ENCODE measurements at regions of chr11 and their contacts with region 1.

Region 1: DNA sequence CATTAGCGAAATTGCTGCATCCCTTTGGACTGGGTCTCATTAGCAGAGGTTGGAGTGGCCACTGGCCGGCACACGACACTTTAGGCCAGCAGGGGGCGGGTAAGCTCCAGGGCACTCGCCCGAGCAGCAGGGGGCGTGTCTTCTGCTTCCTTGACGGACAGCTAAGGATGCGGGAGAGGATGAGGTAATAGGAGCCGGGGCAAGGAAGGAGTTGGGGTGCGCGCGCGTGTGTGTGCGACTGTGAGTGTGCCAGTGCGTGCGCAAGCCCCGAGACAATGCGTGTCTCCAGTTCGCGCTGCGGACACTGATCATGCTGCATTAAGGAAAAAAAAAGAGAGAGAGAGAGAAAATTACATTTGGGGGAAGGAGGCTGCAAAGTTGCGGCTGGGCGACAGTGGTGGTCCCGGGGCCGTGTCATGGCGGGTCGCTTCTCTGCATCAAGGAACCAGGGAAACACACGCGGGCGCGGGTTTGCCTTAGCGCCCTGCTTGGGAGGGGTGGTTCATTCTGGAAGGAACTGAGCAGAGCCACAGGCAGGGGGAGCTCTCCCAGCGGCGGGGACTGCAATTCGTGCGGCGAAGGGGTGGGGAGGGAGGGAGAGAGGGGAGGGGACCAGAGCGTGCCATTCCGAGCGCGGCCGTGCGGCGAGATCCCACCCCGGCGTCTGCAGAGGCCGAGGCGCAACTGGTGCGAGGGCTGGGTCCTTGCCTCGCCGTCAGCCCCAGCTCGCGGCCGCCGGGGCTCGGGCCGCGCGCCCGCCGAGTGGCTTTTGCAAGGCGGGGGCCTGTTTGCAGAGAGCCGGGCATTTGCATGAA is at the start of gene DTX4:
- DNase-seq: peak; percentile 78 to 92 (median 89)
- ATAC-seq: peak; percentile 86
- H3K4me3 ChIP-seq: peak within 1 kb of the TSS; percentile 72 to 85
- H3K4me3 Mint-ChIP-seq: peak within 1 kb of the TSS; percentile 87
- H3K27ac ChIP-seq: peak within 1 kb of the TSS in 1 of 2 experiments; percentile 33
- H3K27ac Mint-ChIP-seq: no peak within 1 kb of the TSS
- H3K4me1 ChIP-seq: peaks cover 9% of the 10 kb centered on the region
- H3K4me1 Mint-ChIP-seq: peaks cover 11% of the 10 kb centered on the region
- H3K27me3 ChIP-seq: peaks cover 0 to 5% of the 10 kb centered on the region in 2 experiments
- H3K27me3 Mint-ChIP-seq: peaks cover 6% of the 10 kb centered on the region
- CTCF ChIP-seq: peak; percentile 95
- total RNA-seq, gene DTX4: 0.68 to 0.97 TPM

Region 2: GRCh38 chr11:59158206-59159068 is 13.3 kb before region 1 on chr11:
- CTCF ChIA-PET with region 1: interaction called, 27 read pairs
- POLR2A ChIA-PET with region 1: interaction called, 3 read pairs
- intact Hi-C with region 1: loop called in 1 of 2 experiments (anchors 1 kb)
- DNase-seq: peak; percentile 31 to 85 (median 59)
- ATAC-seq: peak; percentile 99
- H3K4me3 ChIP-seq: no peak overlapping the region
- H3K4me3 Mint-ChIP-seq: no peak overlapping the region
- H3K27ac ChIP-seq: no peak overlapping the region
- H3K27ac Mint-ChIP-seq: no peak overlapping the region
- H3K4me1 ChIP-seq: no peaks in the 10 kb centered on the region
- H3K4me1 Mint-ChIP-seq: peaks cover 4% of the 10 kb centered on the region
- H3K27me3 ChIP-seq: no peaks in the 10 kb centered on the region
- H3K27me3 Mint-ChIP-seq: peaks cover 22% of the 10 kb centered on the region
- CTCF ChIP-seq: peak; percentile 77

Region 3: DNA sequence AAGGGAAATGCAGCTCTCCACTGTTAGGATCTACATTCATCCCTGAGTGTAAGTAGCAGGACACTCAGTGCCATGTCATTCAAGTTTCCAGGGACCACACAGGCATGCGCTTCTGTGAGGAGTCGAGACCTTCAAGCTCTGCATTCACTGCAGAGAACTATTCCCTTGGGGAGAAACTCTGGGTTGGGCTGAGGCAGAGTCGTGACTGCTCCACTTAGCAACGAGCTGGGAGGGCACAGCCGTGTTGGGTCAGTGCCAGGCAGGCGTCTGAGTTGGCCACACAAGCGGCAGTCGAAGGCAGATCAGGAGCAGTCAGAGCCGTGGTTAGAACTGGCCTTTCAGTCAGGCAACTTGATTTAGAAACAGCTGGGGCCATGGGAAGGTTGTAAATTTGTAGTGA is 26.3 kb after region 1 on chr11:
- CTCF ChIA-PET with region 1: interaction called, 25 read pairs
- POLR2A ChIA-PET with region 1: no interaction called
- intact Hi-C with region 1: no loop called
- DNase-seq: no peak
- ATAC-seq: no peak
- H3K4me3 ChIP-seq: no peak overlapping the region
- H3K4me3 Mint-ChIP-seq: no peak overlapping the region
- H3K27ac ChIP-seq: no peak overlapping the region
- H3K27ac Mint-ChIP-seq: no peak overlapping the region
- H3K4me1 ChIP-seq: no peaks in the 10 kb centered on the region
- H3K4me1 Mint-ChIP-seq: peaks cover 6% of the 10 kb centered on the region
- H3K27me3 ChIP-seq: no peaks in the 10 kb centered on the region
- H3K27me3 Mint-ChIP-seq: no peaks in the 10 kb centered on the region
- CTCF ChIP-seq: no peak

Region 4: DNA sequence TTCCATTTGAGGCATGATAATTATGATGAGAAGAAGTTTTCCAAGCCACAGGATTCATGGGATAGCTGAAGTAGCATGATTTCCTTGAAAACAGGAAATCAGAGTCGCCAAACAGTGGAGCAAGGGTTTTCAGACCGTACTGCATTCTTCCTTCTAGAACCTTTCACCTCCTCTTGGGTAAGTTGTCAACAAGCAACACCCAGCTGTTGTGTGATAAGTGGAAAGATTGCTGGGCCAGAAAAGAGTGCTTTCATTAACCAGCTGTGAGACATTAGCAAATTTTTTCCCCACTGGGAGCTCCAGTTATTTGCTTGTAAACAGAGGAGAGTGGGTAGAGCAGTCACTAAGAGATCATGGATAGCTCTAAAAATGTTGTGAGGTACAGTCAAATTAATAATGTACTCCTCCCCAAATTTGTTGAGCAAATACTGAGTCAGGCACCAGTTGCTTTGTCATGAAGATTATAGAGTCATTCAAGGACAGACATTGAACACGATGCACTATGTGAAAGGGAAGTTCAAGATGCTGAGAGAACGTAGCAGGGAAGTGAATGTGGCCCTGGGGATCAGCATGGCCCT is 52.7 kb after region 1 on chr11:
- CTCF ChIA-PET with region 1: no interaction called
- POLR2A ChIA-PET with region 1: no interaction called
- intact Hi-C with region 1: no loop called
- DNase-seq: peak in 1 of 9 experiments; percentile 18
- ATAC-seq: no peak
- H3K4me3 ChIP-seq: no peak overlapping the region
- H3K4me3 Mint-ChIP-seq: no peak overlapping the region
- H3K27ac ChIP-seq: no peak overlapping the region
- H3K27ac Mint-ChIP-seq: no peak overlapping the region
- H3K4me1 ChIP-seq: no peaks in the 10 kb centered on the region
- H3K4me1 Mint-ChIP-seq: no peaks in the 10 kb centered on the region
- H3K27me3 ChIP-seq: no peaks in the 10 kb centered on the region
- H3K27me3 Mint-ChIP-seq: peaks cover 3% of the 10 kb centered on the region
- CTCF ChIP-seq: no peak

Region 5: GRCh38 chr11:59429924-59430516 is 258.3 kb after region 1 on chr11:
- CTCF ChIA-PET with region 1: interaction called, 18 read pairs
- POLR2A ChIA-PET with region 1: no interaction called
- intact Hi-C with region 1: loop called (anchors 1 kb)
- DNase-seq: peak in 5 of 9 experiments; percentile 2 to 73 (median 31)
- ATAC-seq: peak; percentile 52
- H3K4me3 ChIP-seq: no peak overlapping the region
- H3K4me3 Mint-ChIP-seq: no peak overlapping the region
- H3K27ac ChIP-seq: no peak overlapping the region
- H3K27ac Mint-ChIP-seq: no peak overlapping the region
- H3K4me1 ChIP-seq: no peaks in the 10 kb centered on the region
- H3K4me1 Mint-ChIP-seq: no peaks in the 10 kb centered on the region
- H3K27me3 ChIP-seq: no peaks in the 10 kb centered on the region
- H3K27me3 Mint-ChIP-seq: peaks cover 10% of the 10 kb centered on the region
- CTCF ChIP-seq: peak; percentile 86

Region 6: DNA sequence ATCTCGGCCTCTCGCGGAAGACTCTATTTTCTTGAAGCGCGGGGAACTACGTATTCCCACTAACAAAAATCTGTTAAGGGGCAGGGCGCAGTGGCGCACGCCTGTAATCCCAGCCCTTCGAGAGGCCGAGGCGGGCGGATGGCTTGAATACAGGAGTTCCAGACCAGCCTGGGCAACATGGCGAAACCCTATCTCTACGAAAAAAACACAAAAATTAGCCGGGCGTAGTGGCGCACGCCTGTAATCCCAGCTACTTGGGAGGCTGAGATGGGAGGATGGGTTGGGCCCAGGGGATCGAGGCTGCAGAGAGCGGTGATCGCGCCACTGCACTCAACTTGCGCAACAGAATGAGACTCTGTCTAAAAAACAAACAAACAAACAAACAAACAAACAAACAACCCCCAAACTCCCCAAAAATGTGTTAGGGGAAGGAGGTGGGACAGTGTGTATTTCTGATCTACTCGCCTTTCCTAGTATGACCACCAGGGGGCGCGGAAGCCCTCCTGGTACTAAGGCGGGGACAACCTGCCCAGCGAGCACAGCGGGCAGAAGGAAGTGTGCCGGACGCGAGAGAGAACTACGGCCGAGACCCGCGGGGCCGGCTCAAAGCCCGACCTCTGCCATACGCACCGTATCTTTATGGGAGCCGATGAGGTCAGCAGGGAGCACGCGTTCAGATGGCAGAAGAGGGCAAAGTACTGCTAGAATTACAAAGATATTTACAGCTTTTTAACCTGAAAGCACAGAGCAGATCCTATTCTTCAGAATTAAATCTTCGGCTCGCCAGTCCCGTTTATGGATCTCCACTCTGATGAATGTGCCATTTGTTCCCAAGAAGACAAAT is 582.2 kb after region 1 on chr11:
- CTCF ChIA-PET with region 1: no interaction called
- POLR2A ChIA-PET with region 1: no interaction called
- intact Hi-C with region 1: loop called in 1 of 2 experiments (anchors 10 kb)
- DNase-seq: peak; percentile 65 to 91 (median 85)
- ATAC-seq: peak; percentile 64
- H3K4me3 ChIP-seq: peak overlapping the region; percentile 70 to 97
- H3K4me3 Mint-ChIP-seq: peak overlapping the region; percentile 89
- H3K27ac ChIP-seq: no peak overlapping the region
- H3K27ac Mint-ChIP-seq: no peak overlapping the region
- H3K4me1 ChIP-seq: peaks cover 7% of the 10 kb centered on the region
- H3K4me1 Mint-ChIP-seq: peaks cover 23% of the 10 kb centered on the region
- H3K27me3 ChIP-seq: no peaks in the 10 kb centered on the region
- H3K27me3 Mint-ChIP-seq: peaks cover 9% of the 10 kb centered on the region
- CTCF ChIP-seq: peak; percentile 96